ENCODE measurements at regions of chr6 and their contacts with region 1.

Region 1: GRCh38 chr6:53171605-53172446 is 23.2 kb upstream of the GCM1 start:
- DNase-seq: peak; percentile 85
- ATAC-seq: peak; percentile 90
- H3K4me3 ChIP-seq: no peak overlapping the region
- H3K27ac ChIP-seq: no peak overlapping the region
- H3K4me1 ChIP-seq: no peaks in the 10 kb centered on the region
- H3K27me3 ChIP-seq: no peaks in the 10 kb centered on the region
- CTCF ChIP-seq: peak; percentile 100

Region 2: DNA sequence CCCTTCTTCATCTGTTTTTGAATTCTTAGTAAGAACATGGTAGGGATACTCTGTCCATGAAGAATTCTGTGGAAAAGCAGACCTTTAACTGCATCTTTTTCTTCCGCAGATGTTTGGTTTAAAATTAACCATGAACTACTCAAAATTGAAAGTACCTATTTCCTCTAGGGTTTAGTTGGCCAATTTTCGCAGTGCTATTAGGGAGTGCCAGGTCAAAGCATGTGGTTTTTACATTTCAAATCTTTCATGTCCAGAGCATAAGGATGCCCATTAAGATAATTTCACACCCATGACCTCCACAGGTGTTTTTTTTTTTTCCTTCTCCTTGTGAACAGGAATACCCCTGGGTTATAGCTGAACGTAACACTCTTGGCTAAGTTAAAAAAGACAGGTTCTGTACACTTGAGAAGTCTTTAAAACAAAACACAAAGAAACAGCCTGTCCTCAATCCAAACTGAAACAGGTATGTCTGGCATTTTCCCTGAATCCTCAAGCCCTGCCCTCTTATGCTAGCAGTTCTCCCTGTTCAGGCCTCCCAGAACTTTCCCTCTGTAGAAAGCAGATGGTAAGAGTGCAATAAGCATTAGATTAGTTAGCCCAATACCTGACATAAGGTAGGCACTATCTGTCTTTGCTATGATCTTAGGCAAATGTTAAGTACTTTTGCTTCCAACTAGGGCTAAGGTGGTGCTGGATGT is 109.8 kb after region 1 on chr6:
- CTCF ChIA-PET with region 1: no interaction called
- POLR2A ChIA-PET with region 1: no interaction called
- in situ Hi-C with region 1: no loop called
- intact Hi-C with region 1: no loop called
- DNase-seq: no peak
- ATAC-seq: no peak
- H3K4me3 ChIP-seq: no peak overlapping the region
- H3K27ac ChIP-seq: no peak overlapping the region
- H3K4me1 ChIP-seq: peaks cover 14% of the 10 kb centered on the region
- H3K27me3 ChIP-seq: no peaks in the 10 kb centered on the region
- CTCF ChIP-seq: no peak

Region 3: DNA sequence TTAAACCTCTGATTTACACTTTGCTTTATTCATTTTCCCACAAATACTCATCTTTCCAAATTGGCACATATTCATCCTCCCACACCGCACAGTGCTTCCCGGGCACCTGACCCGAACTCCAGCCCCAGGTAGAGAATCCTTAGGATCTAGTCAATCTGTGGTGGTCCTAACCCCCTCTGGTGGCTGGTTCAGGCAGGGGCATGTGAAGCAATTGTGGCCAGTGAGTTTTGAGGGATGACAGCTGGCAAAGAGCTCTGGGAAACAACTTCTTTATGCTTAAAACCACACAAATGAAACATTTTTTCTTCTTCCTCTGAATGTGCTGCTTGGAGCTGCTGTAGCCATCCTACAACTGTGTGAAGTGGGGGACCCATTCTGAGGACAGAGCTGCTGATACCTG is 122.3 kb after region 1 on chr6:
- CTCF ChIA-PET with region 1: no interaction called
- POLR2A ChIA-PET with region 1: no interaction called
- in situ Hi-C with region 1: no loop called
- intact Hi-C with region 1: loop called (anchors 10 kb)
- DNase-seq: no peak
- ATAC-seq: no peak; the same call in 1 of the 2 replicates
- H3K4me3 ChIP-seq: no peak overlapping the region
- H3K27ac ChIP-seq: no peak overlapping the region
- H3K4me1 ChIP-seq: peaks cover 28% of the 10 kb centered on the region
- H3K27me3 ChIP-seq: no peaks in the 10 kb centered on the region
- CTCF ChIP-seq: peak; percentile 74

Region 4: GRCh38 chr6:53437557-53438202 is 265.9 kb after region 1 on chr6:
- CTCF ChIA-PET with region 1: no interaction called
- POLR2A ChIA-PET with region 1: no interaction called
- in situ Hi-C with region 1: no loop called
- intact Hi-C with region 1: loop called (anchors 1 kb)
- DNase-seq: peak; percentile 48
- ATAC-seq: peak; percentile 96
- H3K4me3 ChIP-seq: no peak overlapping the region
- H3K27ac ChIP-seq: peak overlapping the region; percentile 35
- H3K4me1 ChIP-seq: peaks cover 4% of the 10 kb centered on the region; the same call in 1 of the 2 replicates
- H3K27me3 ChIP-seq: no peaks in the 10 kb centered on the region; the same call in 1 of the 2 replicates
- CTCF ChIP-seq: peak; percentile 82

Region 5: DNA sequence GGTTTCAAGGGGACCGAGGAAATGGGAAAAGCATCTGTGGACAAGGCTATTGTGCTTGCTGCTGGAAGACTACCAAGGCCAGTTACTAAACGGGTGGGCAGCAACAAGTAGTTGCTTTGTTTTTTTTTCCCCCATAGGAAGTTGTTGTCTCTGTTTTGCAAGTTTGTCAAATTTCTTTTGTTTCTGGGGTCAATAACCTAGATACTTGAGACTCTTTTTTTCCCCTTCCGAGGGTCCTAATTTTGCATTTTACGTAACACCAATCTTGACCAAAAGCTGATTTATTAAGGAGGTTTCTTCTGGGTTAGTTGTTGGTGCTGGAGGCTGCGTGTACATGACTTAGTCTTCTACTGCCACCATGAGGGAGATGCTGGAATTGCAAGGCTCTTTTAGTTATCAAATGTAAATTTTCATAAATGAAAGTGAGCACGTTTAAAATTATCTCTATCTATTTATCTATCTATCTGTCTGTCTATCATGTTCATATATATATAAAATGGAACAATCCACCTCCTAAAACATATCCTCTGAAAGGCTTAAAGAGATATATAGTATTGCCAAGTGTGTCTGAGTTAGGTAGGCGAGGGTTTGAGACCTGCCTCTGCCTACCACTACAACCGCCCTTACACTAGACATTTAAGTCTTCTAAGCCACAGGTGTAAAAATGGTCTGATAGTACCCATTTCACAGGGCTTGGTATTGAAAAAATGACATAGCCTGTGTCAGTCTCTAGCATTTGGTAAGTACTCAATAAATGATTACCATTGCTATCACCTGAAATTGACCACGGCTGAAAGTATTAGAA is 312.9 kb after region 1 on chr6:
- CTCF ChIA-PET with region 1: interaction called, 5 read pairs
- POLR2A ChIA-PET with region 1: no interaction called
- in situ Hi-C with region 1: no loop called
- intact Hi-C with region 1: loop called (anchors 1 kb)
- DNase-seq: peak; percentile 54
- ATAC-seq: peak; percentile 84
- H3K4me3 ChIP-seq: no peak overlapping the region
- H3K27ac ChIP-seq: no peak overlapping the region
- H3K4me1 ChIP-seq: no peaks in the 10 kb centered on the region; the same call in 1 of the 2 replicates
- H3K27me3 ChIP-seq: peaks cover 13% of the 10 kb centered on the region; the same call in 1 of the 2 replicates
- CTCF ChIP-seq: peak; percentile 89